ENCODE measurements at regions of chr7 and their contacts with region 1.

Region 1: DNA sequence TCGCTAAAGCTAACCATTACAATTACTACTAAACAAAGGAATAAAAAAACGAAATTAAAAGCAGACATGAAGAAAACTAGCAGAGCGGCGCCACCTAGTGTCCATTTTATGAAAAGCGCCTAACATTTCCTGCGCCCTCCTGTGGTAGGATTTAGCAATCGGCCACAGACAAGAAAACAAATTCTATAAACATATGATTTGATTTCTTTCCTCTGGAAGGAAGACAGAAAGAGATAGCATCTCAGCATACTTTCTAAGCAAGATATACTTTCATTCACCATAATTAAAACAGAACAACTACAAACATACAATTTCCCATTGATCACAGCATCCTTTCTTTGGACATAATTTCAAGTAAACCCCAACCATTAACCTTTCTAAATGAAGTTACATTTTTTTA is 337.7 kb upstream of the NPVF start:
- DNase-seq: peak; percentile 81
- ATAC-seq: peak; percentile 45
- H3K4me3 ChIP-seq: no peak overlapping the region
- H3K4me3 Mint-ChIP-seq: no peak overlapping the region
- H3K27ac ChIP-seq: no peak overlapping the region
- H3K27ac Mint-ChIP-seq: no peak overlapping the region
- H3K4me1 ChIP-seq: no peaks in the 10 kb centered on the region
- H3K4me1 Mint-ChIP-seq: no peaks in the 10 kb centered on the region
- H3K27me3 ChIP-seq: peaks cover 0 to 3% (median 1%) of the 10 kb centered on the region in 4 experiments
- H3K27me3 Mint-ChIP-seq: peaks cover 11% of the 10 kb centered on the region
- CTCF ChIP-seq: peak; percentile 100

Region 2: DNA sequence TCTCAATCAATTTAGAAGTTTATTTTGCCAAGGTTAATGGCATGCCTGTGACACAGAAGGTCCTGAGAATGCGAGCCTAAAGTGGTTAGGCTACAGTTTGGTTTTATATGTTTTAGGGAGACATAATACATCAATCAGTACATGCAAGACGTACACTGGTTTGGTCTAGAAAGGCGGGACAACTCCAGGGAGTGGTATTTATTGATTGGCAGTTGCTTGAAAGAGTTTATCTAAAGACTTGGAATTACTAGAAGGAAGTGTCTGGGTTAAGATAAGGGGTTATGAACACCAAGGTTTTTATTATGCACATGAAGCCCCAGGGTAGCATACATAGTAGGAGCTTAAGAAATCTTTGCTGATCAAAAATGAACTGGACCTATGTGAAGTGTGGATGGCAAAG is 359.2 kb before region 1 on chr7:
- CTCF ChIA-PET with region 1: no interaction called
- POLR2A ChIA-PET with region 1: no interaction called
- intact Hi-C with region 1: no loop called
- DNase-seq: no peak
- ATAC-seq: no peak
- H3K4me3 ChIP-seq: no peak overlapping the region
- H3K4me3 Mint-ChIP-seq: no peak overlapping the region
- H3K27ac ChIP-seq: no peak overlapping the region
- H3K27ac Mint-ChIP-seq: no peak overlapping the region
- H3K4me1 ChIP-seq: no peaks in the 10 kb centered on the region
- H3K4me1 Mint-ChIP-seq: no peaks in the 10 kb centered on the region
- H3K27me3 ChIP-seq: peaks cover 0 to 16% (median 5%) of the 10 kb centered on the region in 4 experiments
- H3K27me3 Mint-ChIP-seq: peaks cover 38% of the 10 kb centered on the region
- CTCF ChIP-seq: no peak

Region 3: GRCh38 chr7:25259587-25260243 is 306.2 kb before region 1 on chr7:
- CTCF ChIA-PET with region 1: interaction called, 153 read pairs
- POLR2A ChIA-PET with region 1: no interaction called
- intact Hi-C with region 1: loop called (anchors 1 kb)
- DNase-seq: peak; percentile 73
- ATAC-seq: peak; percentile 63
- H3K4me3 ChIP-seq: no peak overlapping the region
- H3K4me3 Mint-ChIP-seq: no peak overlapping the region
- H3K27ac ChIP-seq: no peak overlapping the region
- H3K27ac Mint-ChIP-seq: no peak overlapping the region
- H3K4me1 ChIP-seq: peaks cover 7 to 13% of the 10 kb centered on the region in 2 donors
- H3K4me1 Mint-ChIP-seq: peaks cover 10% of the 10 kb centered on the region
- H3K27me3 ChIP-seq: peaks cover 0 to 25% (median 21%) of the 10 kb centered on the region in 4 experiments
- H3K27me3 Mint-ChIP-seq: peaks cover 58% of the 10 kb centered on the region
- CTCF ChIP-seq: peak; percentile 76

Region 4: GRCh38 chr7:25389489-25390106 is 176.4 kb before region 1 on chr7:
- CTCF ChIA-PET with region 1: interaction called, 188 read pairs
- POLR2A ChIA-PET with region 1: interaction called, 3 read pairs
- intact Hi-C with region 1: loop called (anchors 1 kb)
- DNase-seq: peak; percentile 9
- ATAC-seq: no peak
- H3K4me3 ChIP-seq: no peak overlapping the region
- H3K4me3 Mint-ChIP-seq: no peak overlapping the region
- H3K27ac ChIP-seq: no peak overlapping the region
- H3K27ac Mint-ChIP-seq: no peak overlapping the region
- H3K4me1 ChIP-seq: no peaks in the 10 kb centered on the region
- H3K4me1 Mint-ChIP-seq: no peaks in the 10 kb centered on the region
- H3K27me3 ChIP-seq: peaks cover 0 to 9% (median 2%) of the 10 kb centered on the region in 4 experiments
- H3K27me3 Mint-ChIP-seq: peaks cover 21% of the 10 kb centered on the region
- CTCF ChIP-seq: no peak

Region 5: GRCh38 chr7:25578991-25579777 is 13.2 kb after region 1 on chr7:
- CTCF ChIA-PET with region 1: interaction called, 18 read pairs
- POLR2A ChIA-PET with region 1: no interaction called
- intact Hi-C with region 1: no loop called
- DNase-seq: no peak
- ATAC-seq: no peak
- H3K4me3 ChIP-seq: no peak overlapping the region
- H3K4me3 Mint-ChIP-seq: no peak overlapping the region
- H3K27ac ChIP-seq: no peak overlapping the region
- H3K27ac Mint-ChIP-seq: no peak overlapping the region
- H3K4me1 ChIP-seq: no peaks in the 10 kb centered on the region
- H3K4me1 Mint-ChIP-seq: no peaks in the 10 kb centered on the region
- H3K27me3 ChIP-seq: peaks cover 0 to 3% (median 0%) of the 10 kb centered on the region in 4 experiments
- H3K27me3 Mint-ChIP-seq: peaks cover 17% of the 10 kb centered on the region
- CTCF ChIP-seq: no peak

Region 6: GRCh38 chr7:25851332-25852210 is 285.6 kb after region 1 on chr7:
- CTCF ChIA-PET with region 1: no interaction called
- POLR2A ChIA-PET with region 1: no interaction called
- intact Hi-C with region 1: loop called (anchors 1 kb)
- DNase-seq: peak; percentile 79
- ATAC-seq: peak; percentile 73
- H3K4me3 ChIP-seq: no peak overlapping the region
- H3K4me3 Mint-ChIP-seq: peak overlapping the region; percentile 70
- H3K27ac ChIP-seq: no peak overlapping the region
- H3K27ac Mint-ChIP-seq: peak overlapping the region; percentile 79
- H3K4me1 ChIP-seq: peaks cover 15 to 36% of the 10 kb centered on the region in 2 donors
- H3K4me1 Mint-ChIP-seq: peaks cover 15% of the 10 kb centered on the region
- H3K27me3 ChIP-seq: peaks cover 0 to 57% (median 52%) of the 10 kb centered on the region in 4 experiments
- H3K27me3 Mint-ChIP-seq: peaks cover 64% of the 10 kb centered on the region
- CTCF ChIP-seq: peak; percentile 78